Panc1 (cell line): ENCODE measurements at regions of chr12 and their contacts with region 1.

Region 1: DNA sequence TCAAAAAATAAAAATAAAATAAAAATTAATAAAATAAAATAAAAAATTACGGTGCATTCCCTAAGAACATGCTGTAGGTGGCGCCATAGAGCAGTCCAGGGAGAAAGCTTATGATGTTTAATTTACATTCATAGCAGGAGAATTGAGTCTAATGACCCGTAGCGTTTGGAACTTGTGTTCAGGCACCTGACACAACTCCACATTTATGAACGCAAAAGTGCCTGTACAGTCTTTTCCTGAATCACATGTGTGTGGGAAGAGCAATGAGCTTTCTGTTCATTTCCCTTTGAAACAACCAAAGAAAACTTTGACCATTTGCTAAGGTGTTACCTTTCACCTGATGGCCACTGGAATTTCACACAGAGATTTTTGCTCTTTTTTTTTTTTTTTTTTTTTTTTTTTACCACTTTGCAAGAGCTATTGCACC is 60.6 kb upstream of the KCNA1 start:
- DNase-seq: peak; percentile 17
- ATAC-seq: no peak
- H3K4me3 ChIP-seq: no peak overlapping the region
- H3K27ac ChIP-seq: no peak overlapping the region
- H3K4me1 ChIP-seq: no peaks in the 10 kb centered on the region
- H3K27me3 ChIP-seq: no peaks in the 10 kb centered on the region
- CTCF ChIP-seq: peak; percentile 75

Region 2: DNA sequence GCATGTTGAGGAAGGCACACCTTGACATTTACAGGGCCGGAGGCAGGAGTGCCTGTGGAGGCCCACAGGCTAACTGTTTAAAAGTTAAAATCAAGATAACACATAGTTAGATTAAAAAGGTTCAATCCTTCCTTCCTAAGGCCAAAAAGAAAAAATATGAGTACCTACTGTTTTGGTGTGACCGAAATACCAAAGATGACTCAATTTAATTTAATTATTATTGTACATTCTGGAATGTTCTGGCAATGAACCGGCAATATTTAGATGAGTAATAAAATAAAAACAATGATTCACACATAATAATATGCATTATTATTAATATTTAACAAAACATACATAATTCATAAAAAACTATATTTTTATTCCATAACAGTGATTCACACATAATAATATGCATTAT is 446.0 kb after region 1 on chr12:
- CTCF ChIA-PET with region 1: no interaction called
- POLR2A ChIA-PET with region 1: no interaction called
- in situ Hi-C with region 1: no loop called
- intact Hi-C with region 1: no loop called
- DNase-seq: no peak
- ATAC-seq: no peak
- H3K4me3 ChIP-seq: no peak overlapping the region
- H3K27ac ChIP-seq: no peak overlapping the region
- H3K4me1 ChIP-seq: no peaks in the 10 kb centered on the region
- H3K27me3 ChIP-seq: no peaks in the 10 kb centered on the region; the same call in 1 of the 2 replicates
- CTCF ChIP-seq: no peak

Region 3: GRCh38 chr12:5973461-5974130 is 1124.5 kb after region 1 on chr12:
- CTCF ChIA-PET with region 1: interaction called, 13 read pairs
- POLR2A ChIA-PET with region 1: no interaction called
- in situ Hi-C with region 1: no loop called
- intact Hi-C with region 1: no loop called
- DNase-seq: no peak
- ATAC-seq: no peak
- H3K4me3 ChIP-seq: no peak overlapping the region
- H3K27ac ChIP-seq: no peak overlapping the region
- H3K4me1 ChIP-seq: no peaks in the 10 kb centered on the region
- H3K27me3 ChIP-seq: peaks cover 5% of the 10 kb centered on the region
- CTCF ChIP-seq: no peak